ENCODE measurements at regions of chr18 and their contacts with region 1.

Region 1: DNA sequence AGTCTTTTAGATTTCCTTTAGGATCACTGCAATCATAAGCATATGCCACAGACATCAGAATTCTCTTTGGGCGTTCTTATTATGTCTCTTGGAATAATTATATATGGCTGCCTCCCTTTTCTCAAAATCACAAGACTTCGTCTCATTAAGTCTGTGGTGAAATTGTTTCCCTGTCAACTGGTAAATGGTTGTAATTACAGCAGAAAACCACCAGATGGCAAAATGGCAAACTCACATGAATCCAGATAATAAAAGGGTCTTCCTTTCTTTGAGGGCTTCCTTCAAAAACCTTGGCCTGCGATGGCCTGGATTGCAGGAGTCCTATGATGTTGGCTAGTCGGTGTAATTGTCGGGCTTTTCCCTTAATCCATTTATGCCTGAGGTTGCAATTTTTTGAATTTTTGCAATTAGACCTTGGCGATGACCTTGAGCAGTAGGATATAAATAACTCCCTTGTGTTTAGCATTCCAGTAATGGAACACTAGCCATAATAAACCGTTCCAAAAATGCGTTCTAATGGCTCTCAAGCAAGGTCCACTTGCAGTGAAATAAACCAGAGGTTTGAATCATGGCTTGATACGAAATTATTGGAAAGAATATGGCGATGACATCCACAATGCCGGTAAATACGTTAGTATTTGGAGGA is 656.4 kb downstream of the MBD2 start:
- DNase-seq: peak in 3 of 14 experiments; percentile 13 to 28 (median 25)
- ATAC-seq: no peak
- H3K4me3 ChIP-seq: no peak overlapping the region
- H3K4me3 Mint-ChIP-seq: no peak overlapping the region
- H3K27ac ChIP-seq: no peak overlapping the region
- H3K27ac Mint-ChIP-seq: no peak overlapping the region
- H3K4me1 ChIP-seq: no peaks in the 10 kb centered on the region
- H3K4me1 Mint-ChIP-seq: no peaks in the 10 kb centered on the region
- H3K27me3 ChIP-seq: no peaks in the 10 kb centered on the region
- H3K27me3 Mint-ChIP-seq: no peaks in the 10 kb centered on the region
- CTCF ChIP-seq: peak; percentile 44

Region 2: DNA sequence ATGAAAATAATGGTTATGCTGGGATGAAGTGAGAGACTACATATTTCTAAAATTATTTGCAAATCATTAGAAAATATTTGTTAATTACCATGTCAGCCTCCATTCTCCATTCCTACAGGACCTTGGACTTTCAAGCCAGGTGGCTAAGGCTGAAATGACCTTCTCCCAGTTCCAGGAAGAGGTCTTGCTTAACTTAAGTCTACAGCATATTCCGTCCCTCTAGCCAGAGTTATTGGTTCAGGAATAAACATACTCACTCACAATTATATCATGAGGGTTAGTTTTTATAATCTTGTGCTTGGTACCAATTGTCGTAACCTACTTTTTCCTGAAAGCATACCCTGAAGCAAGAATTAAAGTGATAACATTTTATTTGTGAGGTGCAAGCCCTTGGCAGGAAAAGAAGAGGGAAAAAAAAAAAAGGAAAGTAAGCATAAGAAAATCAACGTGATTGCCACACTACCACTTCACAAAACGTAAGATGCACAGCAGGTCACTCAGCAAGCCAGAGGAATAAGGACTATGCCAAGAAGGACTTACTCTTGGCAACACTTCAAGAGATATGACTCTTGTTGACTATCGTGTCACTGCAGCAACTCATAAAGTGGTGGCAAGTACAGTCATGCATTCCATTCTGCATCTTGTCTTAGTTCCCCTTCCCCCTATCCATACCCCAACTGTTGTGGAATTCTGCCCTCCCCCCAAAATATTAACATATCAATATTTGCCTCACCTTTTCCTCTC is 177.3 kb after region 1 on chr18:
- CTCF ChIA-PET with region 1: no interaction called
- POLR2A ChIA-PET with region 1: no interaction called
- intact Hi-C with region 1: no loop called
- DNase-seq: no peak
- ATAC-seq: no peak
- H3K4me3 ChIP-seq: no peak overlapping the region
- H3K4me3 Mint-ChIP-seq: no peak overlapping the region
- H3K27ac ChIP-seq: no peak overlapping the region
- H3K27ac Mint-ChIP-seq: no peak overlapping the region
- H3K4me1 ChIP-seq: no peaks in the 10 kb centered on the region
- H3K4me1 Mint-ChIP-seq: no peaks in the 10 kb centered on the region
- H3K27me3 ChIP-seq: no peaks in the 10 kb centered on the region
- H3K27me3 Mint-ChIP-seq: no peaks in the 10 kb centered on the region
- CTCF ChIP-seq: no peak

Region 3: DNA sequence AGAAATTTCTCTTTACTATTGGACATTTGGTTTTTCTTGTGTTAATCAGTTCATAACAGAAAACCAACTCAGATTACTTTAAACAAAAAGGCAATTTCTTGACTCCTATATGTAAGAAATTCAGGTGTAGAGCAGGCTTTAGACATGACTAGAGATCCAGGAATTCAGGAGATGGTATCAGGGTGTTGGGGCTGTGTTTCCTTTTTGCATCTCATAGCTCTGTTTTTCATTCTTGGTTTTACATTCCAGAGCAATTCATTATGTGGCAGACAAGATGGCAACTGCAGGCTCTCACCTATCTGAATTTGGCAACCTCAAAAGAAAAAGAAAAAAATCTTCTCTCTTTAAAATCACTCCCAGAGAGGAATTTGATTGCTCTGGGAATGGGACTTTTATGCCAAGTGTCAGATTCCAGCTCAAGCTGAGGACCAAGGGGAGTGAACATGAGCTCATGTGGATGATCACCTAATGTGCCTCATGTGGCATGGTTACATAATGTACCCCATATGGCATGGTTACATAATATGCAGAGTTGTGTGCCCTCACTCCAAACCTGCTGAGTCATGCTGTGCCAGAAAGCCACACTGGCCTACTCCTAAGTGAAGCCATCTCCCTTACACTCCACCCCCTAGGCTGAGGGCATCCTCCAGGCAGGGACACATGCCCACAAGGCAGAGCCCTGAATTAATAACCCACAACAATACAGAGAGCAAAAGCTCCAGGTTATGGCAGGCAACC is 373.7 kb after region 1 on chr18:
- CTCF ChIA-PET with region 1: no interaction called
- POLR2A ChIA-PET with region 1: no interaction called
- intact Hi-C with region 1: no loop called
- DNase-seq: no peak
- ATAC-seq: no peak
- H3K4me3 ChIP-seq: no peak overlapping the region
- H3K4me3 Mint-ChIP-seq: no peak overlapping the region
- H3K27ac ChIP-seq: no peak overlapping the region
- H3K27ac Mint-ChIP-seq: no peak overlapping the region
- H3K4me1 ChIP-seq: no peaks in the 10 kb centered on the region
- H3K4me1 Mint-ChIP-seq: no peaks in the 10 kb centered on the region
- H3K27me3 ChIP-seq: no peaks in the 10 kb centered on the region
- H3K27me3 Mint-ChIP-seq: no peaks in the 10 kb centered on the region
- CTCF ChIP-seq: no peak

Region 4: GRCh38 chr18:54119524-54120019 is 551.5 kb after region 1 on chr18:
- CTCF ChIA-PET with region 1: no interaction called
- POLR2A ChIA-PET with region 1: no interaction called
- intact Hi-C with region 1: loop called (anchors 1 to 5 kb)
- DNase-seq: peak in 3 of 14 experiments; percentile 48 to 59 (median 50)
- ATAC-seq: peak; percentile 55
- H3K4me3 ChIP-seq: no peak overlapping the region
- H3K4me3 Mint-ChIP-seq: no peak overlapping the region
- H3K27ac ChIP-seq: no peak overlapping the region
- H3K27ac Mint-ChIP-seq: no peak overlapping the region
- H3K4me1 ChIP-seq: no peaks in the 10 kb centered on the region
- H3K4me1 Mint-ChIP-seq: peaks cover 4% of the 10 kb centered on the region
- H3K27me3 ChIP-seq: no peaks in the 10 kb centered on the region
- H3K27me3 Mint-ChIP-seq: peaks cover 10% of the 10 kb centered on the region
- CTCF ChIP-seq: peak; percentile 75

Region 5: GRCh38 chr18:54671291-54671881 is 1103.3 kb after region 1 on chr18:
- CTCF ChIA-PET with region 1: no interaction called
- POLR2A ChIA-PET with region 1: no interaction called
- intact Hi-C with region 1: loop called in 1 of 2 experiments (anchors 5 kb)
- DNase-seq: peak in 3 of 14 experiments; percentile 33 to 40 (median 39)
- ATAC-seq: no peak
- H3K4me3 ChIP-seq: no peak overlapping the region
- H3K4me3 Mint-ChIP-seq: no peak overlapping the region
- H3K27ac ChIP-seq: no peak overlapping the region
- H3K27ac Mint-ChIP-seq: no peak overlapping the region
- H3K4me1 ChIP-seq: no peaks in the 10 kb centered on the region
- H3K4me1 Mint-ChIP-seq: no peaks in the 10 kb centered on the region
- H3K27me3 ChIP-seq: no peaks in the 10 kb centered on the region
- H3K27me3 Mint-ChIP-seq: peaks cover 7% of the 10 kb centered on the region
- CTCF ChIP-seq: peak; percentile 63